ENCODE measurements at regions of chr14 and their contacts with region 1.

Region 1: GRCh38 chr14:54411371-54411770 is 14.6 kb downstream of the CDKN3 start:
- DNase-seq: no peak
- CTCF ChIP-seq: no peak

Region 2: DNA sequence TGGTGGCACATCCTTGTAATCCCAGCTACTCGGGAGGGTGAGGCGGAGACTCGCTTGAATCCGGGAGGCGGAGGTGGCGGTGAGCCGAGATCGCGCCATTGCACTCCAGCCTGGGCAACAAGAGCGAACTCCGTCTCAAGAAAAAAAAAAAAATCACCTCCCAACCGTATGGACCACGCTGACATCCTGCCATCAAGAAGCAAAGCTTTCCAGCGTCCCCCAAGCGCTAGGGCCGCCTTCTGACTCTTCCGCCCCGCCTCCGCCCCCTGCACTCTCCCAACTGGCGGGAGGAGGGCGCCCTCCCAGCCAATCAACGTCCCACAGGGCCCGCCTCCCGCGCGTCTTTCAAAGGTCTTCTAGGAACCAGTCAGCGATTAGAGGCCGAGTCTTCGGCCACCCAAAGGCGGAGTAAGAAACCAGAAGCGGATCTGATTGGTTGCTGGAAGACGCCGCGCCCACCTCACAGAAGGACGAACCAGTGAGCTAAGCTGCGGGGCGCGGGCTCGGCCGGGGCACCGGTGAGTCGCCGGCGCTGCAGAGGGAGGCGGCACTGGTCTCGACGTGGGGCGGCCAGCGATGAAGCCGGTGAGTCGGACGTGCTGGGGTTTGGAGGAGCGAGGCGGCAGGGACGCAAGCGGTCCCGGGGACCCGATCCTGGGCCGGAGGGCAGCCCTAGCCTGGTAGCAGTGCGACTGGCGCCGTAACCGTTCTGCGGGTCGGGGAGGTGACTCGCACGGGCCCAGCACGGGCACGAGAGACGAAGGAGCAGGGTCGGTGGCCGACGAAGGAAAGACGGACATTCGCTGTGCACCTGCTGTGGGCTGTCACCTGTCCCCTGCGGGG is 14.7 kb before region 1 on chr14 and contains the start of gene CDKN3:
- CTCF ChIA-PET with region 1: interaction called, 52 read pairs
- POLR2A ChIA-PET with region 1: interaction called, 3 read pairs
- DNase-seq: peak; percentile 98
- CTCF ChIP-seq: peak; percentile 50

Region 3: GRCh38 chr14:54424479-54424901 is 13.1 kb after region 1 on chr14:
- CTCF ChIA-PET with region 1: interaction called, 11 read pairs
- POLR2A ChIA-PET with region 1: no interaction called
- DNase-seq: no peak
- CTCF ChIP-seq: no peak

Measured in GM10248 (cell line).